SK-N-SH (cell line): ENCODE measurements at regions of chr7 and their contacts with region 1.

Region 1: DNA sequence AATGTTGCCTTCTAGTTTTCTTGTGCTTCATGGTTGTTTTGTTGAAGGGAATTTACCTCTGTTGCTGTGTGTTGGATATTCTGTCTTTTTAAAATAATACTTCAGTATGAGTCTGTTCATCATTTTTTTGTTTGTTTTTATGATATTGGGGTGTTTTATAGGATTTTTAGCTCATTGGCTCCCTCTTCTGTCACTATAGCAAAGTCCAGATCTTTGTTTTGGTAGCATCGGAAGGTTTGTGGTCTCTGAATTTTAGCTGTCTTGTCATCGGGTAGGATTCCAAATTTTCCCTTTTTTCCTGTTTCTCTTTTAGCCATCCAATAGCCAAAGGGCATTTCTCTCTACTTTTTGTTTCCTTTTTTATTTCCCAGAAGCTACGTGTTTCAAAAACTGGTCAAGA is 91.4 kb downstream of the EXOC4 start:
- DNase-seq: peak; percentile 49
- H3K4me3 ChIP-seq: no peak overlapping the region
- H3K27ac ChIP-seq: peak overlapping the region in 1 of 2 experiments; percentile 36; a peak in 1 of 4 replicates
- H3K4me1 ChIP-seq: peaks cover 0 to 6% of the 10 kb centered on the region in 2 experiments; a peak in 2 of 4 replicates
- H3K27me3 ChIP-seq: no peaks in the 10 kb centered on the region
- CTCF ChIP-seq: peak; percentile 78
- EP300 ChIP-seq: no peak
- RAD21 ChIP-seq: peak; percentile 83

Region 2: DNA sequence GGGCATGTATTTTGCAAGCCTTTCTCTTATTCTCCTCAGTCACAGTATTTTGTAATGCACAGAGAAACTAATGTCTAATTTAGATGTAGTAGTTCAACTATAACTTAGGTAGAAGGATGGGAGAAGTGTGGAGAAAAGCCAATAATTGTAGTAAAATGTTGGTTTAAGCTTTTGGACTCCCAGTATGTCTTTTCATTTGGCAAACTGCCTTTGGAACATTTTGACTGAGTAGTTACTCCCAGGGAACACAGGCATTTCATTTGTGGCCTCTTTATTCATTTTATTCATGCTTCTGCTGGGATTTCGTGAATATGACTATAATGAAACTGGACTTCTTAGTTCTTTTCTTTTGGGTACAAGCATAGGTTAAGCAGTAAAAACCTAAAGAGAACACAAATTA is 12.4 kb before region 1 on chr7:
- CTCF ChIA-PET with region 1: interaction called, 16 read pairs
- POLR2A ChIA-PET with region 1: no interaction called
- DNase-seq: no peak
- H3K4me3 ChIP-seq: no peak overlapping the region
- H3K27ac ChIP-seq: no peak overlapping the region
- H3K4me1 ChIP-seq: no peaks in the 10 kb centered on the region
- H3K27me3 ChIP-seq: no peaks in the 10 kb centered on the region
- CTCF ChIP-seq: no peak
- EP300 ChIP-seq: no peak
- RAD21 ChIP-seq: no peak